ENCODE measurements at regions of chr11 and their contacts with region 1.

Region 1: GRCh38 chr11:107770551-107770951 is 58.7 kb upstream of the SLN start:
- DNase-seq: no peak
- ATAC-seq: no peak
- H3K4me3 ChIP-seq: no peak overlapping the region
- H3K4me3 Mint-ChIP-seq: no peak overlapping the region
- H3K27ac ChIP-seq: no peak overlapping the region
- H3K27ac Mint-ChIP-seq: no peak overlapping the region
- H3K4me1 ChIP-seq: no peaks in the 10 kb centered on the region
- H3K4me1 Mint-ChIP-seq: peaks cover 0 to 2% (median 0%) of the 10 kb centered on the region in 3 donors
- H3K27me3 ChIP-seq: no peaks in the 10 kb centered on the region
- H3K27me3 Mint-ChIP-seq: peaks cover 14 to 18% of the 10 kb centered on the region in 2 donors

Region 2: DNA sequence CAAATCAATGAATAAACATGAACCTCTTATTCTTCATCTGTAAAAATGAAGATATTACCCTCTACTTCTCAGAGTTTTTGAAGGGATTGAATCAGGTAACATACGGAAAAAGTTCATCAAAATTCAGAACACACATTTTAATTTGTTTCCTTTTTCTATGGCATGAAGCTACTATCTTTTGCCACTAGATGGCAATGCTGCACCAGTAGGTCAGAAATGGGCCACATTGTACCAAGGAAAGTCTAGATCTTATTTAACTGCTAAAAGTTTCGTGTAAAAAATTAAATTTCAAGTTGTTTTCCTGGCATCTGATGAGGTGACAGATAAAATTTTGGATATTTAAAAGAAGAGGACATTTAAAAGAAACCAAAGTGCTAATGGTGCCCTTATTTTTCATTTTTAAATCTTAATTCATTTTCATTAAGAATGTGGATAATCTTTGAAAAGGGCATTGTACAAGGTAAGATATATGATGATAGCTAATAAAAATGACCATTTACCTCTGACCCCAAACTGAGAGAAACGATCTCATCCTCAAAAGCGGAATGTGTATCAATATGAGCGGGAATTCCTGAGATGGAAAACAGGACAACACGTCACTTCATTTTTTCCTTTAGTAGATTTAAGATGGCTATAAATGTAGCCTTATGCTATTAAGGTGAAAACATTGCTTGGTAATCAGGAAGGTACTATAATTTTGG is 221.1 kb before region 1 on chr11:
- CTCF ChIA-PET with region 1: interaction called, 3 to 10 read pairs
- POLR2A ChIA-PET with region 1: no interaction called
- DNase-seq: peak in 18 of 35 experiments; percentile 3 to 67 (median 17)
- ATAC-seq: peak in 1 of 4 experiments; percentile 41
- H3K4me3 ChIP-seq: no peak overlapping the region
- H3K4me3 Mint-ChIP-seq: no peak overlapping the region
- H3K27ac ChIP-seq: no peak overlapping the region
- H3K27ac Mint-ChIP-seq: no peak overlapping the region
- H3K4me1 ChIP-seq: no peaks in the 10 kb centered on the region
- H3K4me1 Mint-ChIP-seq: no peaks in the 10 kb centered on the region
- H3K27me3 ChIP-seq: no peaks in the 10 kb centered on the region
- H3K27me3 Mint-ChIP-seq: no peaks in the 10 kb centered on the region

Region 3: DNA sequence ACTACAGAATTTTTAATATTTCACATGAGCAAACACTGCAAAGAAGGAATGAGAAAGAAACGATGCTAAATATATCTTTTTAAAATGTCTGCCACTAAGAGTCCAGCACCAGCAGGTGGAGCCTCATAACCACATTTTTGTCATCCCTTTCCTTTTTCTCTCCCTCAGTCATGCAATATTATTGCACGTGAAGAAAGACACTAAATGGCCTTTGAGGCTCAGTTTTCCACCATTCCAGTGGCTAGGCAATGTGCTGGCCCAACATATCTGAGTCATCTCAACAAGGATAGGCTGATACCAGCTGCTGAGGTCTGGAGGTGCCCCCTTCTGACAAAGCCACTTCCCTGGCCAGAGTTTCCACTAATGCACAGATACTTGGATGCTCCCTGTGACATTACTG is 206.8 kb before region 1 on chr11:
- CTCF ChIA-PET with region 1: interaction called, 9 to 11 read pairs
- POLR2A ChIA-PET with region 1: no interaction called
- DNase-seq: peak in 26 of 35 experiments; percentile 2 to 67 (median 26)
- ATAC-seq: no peak
- H3K4me3 ChIP-seq: no peak overlapping the region
- H3K4me3 Mint-ChIP-seq: peak overlapping the region; percentile 23 to 86 (median 34)
- H3K27ac ChIP-seq: no peak overlapping the region
- H3K27ac Mint-ChIP-seq: peak overlapping the region in 1 of 2 donors; percentile 63
- H3K4me1 ChIP-seq: peaks cover 12 to 21% of the 10 kb centered on the region in 2 experiments
- H3K4me1 Mint-ChIP-seq: peaks cover 51 to 61% (median 57%) of the 10 kb centered on the region in 3 donors
- H3K27me3 ChIP-seq: no peaks in the 10 kb centered on the region
- H3K27me3 Mint-ChIP-seq: no peaks in the 10 kb centered on the region

Region 4: DNA sequence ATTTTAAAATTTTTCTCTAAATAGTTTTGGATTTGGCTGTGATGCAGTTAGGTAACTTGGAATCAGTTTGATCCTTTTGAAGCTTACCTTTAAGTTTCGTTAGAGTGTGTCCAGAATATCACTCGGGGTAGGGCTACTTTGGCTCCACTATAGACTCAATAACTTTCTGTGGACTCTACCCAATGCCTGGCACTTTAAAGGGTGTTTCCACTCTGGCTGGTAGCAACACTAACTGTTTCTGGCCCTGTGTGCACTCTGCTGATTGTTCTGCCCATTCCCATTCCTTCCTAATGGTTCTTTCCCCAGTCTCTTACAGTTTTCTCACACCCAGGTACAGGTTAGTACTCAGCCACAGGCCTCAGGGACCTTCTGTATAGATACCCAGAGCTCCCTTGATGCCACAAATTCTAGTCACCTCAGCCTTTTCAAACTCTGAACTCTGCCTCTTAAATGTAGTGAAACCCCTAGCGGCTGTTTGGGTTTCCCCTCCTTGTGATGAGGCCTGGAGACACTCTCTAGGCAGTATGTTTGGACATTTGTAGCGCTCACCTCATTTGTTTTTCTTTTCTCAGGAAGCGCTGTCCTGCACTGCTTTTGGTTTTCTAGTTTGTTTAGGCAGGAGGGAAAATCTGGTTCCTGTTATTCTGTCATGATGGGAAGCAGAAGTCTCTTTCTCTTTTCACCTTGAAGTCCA is 255.0 kb after region 1 on chr11:
- CTCF ChIA-PET with region 1: no interaction called
- POLR2A ChIA-PET with region 1: no interaction called
- DNase-seq: peak in 1 of 35 experiments; percentile 6
- ATAC-seq: no peak
- H3K4me3 ChIP-seq: no peak overlapping the region
- H3K4me3 Mint-ChIP-seq: no peak overlapping the region
- H3K27ac ChIP-seq: no peak overlapping the region
- H3K27ac Mint-ChIP-seq: peak overlapping the region in 1 of 2 donors; percentile 36
- H3K4me1 ChIP-seq: peaks cover 0 to 6% of the 10 kb centered on the region in 2 experiments
- H3K4me1 Mint-ChIP-seq: peaks cover 65 to 69% (median 68%) of the 10 kb centered on the region in 3 donors
- H3K27me3 ChIP-seq: no peaks in the 10 kb centered on the region
- H3K27me3 Mint-ChIP-seq: no peaks in the 10 kb centered on the region